Right ventricle myocardium inferior (tissue), 1 donor: ENCODE measurements at regions of chr12 and their contacts with region 1.

Region 1: DNA sequence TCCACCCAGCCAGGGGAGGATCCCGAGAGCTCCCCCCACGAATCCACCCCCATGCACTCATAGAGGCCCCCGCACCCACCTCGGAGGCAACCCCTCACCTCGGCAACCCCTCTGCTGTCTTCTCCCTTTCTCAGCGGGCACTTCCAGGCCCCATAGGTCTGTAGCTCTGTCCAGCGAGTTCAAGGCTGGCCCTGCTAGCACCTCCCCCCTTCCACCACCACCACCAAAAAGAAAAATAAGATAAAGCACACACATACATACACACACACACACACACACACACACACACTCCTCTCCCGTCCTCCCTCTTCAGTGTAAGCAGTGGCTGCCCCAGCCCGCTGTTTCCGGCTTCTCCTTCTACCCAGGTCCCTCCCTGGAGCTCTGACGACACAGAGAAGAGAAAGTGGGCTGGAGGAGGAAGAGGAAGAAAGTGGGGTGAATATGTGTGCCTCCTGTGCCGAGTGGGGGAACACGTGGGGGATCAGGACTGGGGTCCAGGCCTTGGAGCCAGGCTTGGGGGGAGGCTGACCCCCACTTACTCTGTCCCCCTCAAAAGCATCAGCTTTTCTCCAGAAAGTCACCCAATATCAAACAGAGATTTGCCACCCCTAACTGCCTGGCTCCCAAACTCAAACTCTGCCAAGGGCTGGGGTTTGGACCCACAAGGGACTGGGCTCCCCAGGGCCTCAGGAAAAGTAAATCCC is at the start of gene STAT6:
- DNase-seq: peak; percentile 94
- ATAC-seq: peak; percentile 75
- total RNA-seq, gene STAT6: 58.3 TPM

Region 2: GRCh38 chr12:56286044-56286830 is 824.9 kb before region 1 on chr12:
- intact Hi-C with region 1: no loop called
- DNase-seq: no peak
- ATAC-seq: no peak

Region 3: DNA sequence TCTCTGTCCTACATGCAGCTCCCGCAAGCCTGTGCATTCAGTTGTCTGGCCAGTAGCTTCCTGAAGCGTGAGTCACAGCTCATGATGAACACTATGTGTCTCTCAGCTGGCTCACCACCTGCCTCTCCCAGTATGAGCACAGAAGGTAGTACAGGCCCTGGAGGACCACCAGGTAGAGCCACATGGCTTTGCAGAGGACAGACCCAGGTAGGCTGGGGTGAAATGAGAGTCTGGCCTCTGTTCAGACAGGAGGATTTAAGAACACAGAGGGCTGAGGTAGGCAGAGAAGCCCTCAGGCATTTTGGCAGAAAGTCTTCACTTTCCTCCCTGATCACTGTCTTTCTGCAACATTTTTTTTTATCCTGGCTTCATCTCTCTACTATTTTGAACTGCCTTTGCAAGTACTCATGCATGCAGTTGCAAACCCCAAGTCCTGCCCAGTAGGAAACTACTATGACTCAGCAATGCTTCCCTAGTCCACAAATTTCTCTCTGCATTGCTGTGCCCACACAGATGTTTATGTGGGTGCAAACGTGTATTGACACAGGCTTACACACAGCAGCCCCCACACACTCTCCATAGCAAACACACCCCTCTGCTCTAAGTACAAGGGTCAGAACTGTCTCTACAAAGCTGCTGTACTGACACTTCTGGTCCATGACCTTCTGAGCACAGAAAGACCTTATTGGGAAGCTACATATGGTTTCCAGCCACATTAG is 169.7 kb before region 1 on chr12:
- intact Hi-C with region 1: no loop called
- DNase-seq: no peak
- ATAC-seq: no peak

Region 4: GRCh38 chr12:57005980-57006808 is 105.0 kb before region 1 on chr12 and contains the start of gene ZBTB39:
- intact Hi-C with region 1: loop called (anchors 5 kb)
- DNase-seq: peak; percentile 77
- ATAC-seq: peak; percentile 82
- total RNA-seq, gene ZBTB39: 3.3 TPM

Region 5: DNA sequence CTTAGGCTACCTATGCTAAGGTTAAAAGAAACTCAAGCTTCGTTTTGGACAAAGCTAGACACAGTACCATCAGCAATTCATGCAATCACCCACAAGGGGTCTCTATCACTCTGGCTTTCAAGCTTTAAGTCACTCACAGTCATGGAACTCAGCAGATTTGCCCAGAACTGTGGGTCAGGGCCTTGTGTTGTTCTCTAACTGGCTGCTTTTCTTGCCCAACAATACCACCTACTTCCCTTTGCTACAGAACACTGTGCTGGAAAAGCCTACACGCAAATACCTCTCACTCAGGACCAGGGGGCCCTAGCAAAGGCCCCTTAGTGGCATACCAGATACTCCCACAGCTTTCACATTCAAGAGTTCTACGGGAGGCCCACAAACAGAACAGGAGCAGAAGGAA is 41.7 kb before region 1 on chr12:
- intact Hi-C with region 1: loop called (anchors 1 kb)
- DNase-seq: peak; percentile 68
- ATAC-seq: peak; percentile 94

Region 6: GRCh38 chr12:57088459-57089248 is 22.5 kb before region 1 on chr12 and contains the start of gene NAB2:
- intact Hi-C with region 1: loop called (anchors 1 kb)
- DNase-seq: peak; percentile 99
- ATAC-seq: peak; percentile 86
- total RNA-seq, gene NAB2: 9.8 TPM

Region 7: DNA sequence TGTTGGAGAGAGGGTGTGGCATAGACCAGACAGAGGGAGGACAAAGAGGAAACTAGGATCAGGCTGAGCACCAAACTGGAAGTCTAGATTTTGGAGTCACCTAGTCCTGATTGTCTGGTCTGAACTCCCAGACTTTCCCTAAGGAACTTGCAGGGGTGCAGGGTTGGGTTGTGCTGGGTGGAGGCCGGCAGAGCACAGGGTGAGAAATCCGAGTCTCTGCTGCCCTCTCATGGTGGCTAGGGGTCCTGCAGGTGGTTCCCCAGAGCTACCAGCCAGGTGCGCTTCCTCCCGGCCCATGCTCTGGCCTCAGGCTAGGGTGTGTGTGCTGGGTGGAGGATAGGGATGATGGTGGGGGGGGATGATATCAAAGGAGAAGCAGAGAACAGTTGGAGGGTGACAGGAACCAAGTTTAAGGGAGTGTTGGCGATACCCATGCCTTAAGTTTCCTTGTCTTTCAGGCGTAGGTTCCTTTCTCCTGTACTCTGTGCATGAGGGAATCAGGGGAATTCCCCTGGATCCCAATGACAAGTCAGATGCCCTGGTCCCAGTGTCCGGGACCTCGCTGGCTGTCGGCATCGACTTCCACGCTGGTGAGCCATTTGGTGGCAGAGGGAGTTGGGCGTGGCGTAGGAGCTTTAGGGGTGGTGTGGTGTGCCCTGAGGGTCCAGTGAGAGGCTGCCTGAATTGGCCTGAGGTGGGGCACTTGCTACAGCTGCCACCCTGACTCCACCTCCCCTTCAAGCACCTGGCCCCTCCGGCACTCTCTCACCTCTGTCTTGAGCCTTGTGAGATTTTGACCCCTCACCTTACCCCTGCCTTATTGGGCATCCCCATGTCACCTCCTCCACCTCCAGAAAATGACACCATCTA is 72.0 kb after region 1 on chr12:
- intact Hi-C with region 1: no loop called
- DNase-seq: peak; percentile 84
- ATAC-seq: peak; percentile 80

Region 8: GRCh38 chr12:58670623-58671022 is 1559.4 kb after region 1 on chr12:
- intact Hi-C with region 1: no loop called
- DNase-seq: no peak
- ATAC-seq: no peak